ENCODE measurements at regions of chr7 and their contacts with region 1.

Region 1: GRCh38 chr7:134420424-134421125 is 38.3 kb downstream of the AKR1B1 start:
- DNase-seq: peak; percentile 55
- H3K4me3 ChIP-seq: no peak overlapping the region
- H3K27ac ChIP-seq: no peak overlapping the region
- H3K4me1 ChIP-seq: peaks cover 6% of the 10 kb centered on the region
- H3K27me3 ChIP-seq: no peaks in the 10 kb centered on the region
- CTCF ChIP-seq: peak; percentile 76 to 89

Region 2: GRCh38 chr7:133987582-133987981 is 433.0 kb before region 1 on chr7:
- CTCF ChIA-PET with region 1: no interaction called
- dilution Hi-C with region 1: no loop called
- in situ Hi-C with region 1: no loop called
- intact Hi-C with region 1: loop called (anchors 1 kb)
- DNase-seq: no peak
- H3K4me3 ChIP-seq: no peak overlapping the region
- H3K27ac ChIP-seq: no peak overlapping the region
- H3K4me1 ChIP-seq: peaks cover 16% of the 10 kb centered on the region
- H3K27me3 ChIP-seq: no peaks in the 10 kb centered on the region
- CTCF ChIP-seq: no peak

Region 3: DNA sequence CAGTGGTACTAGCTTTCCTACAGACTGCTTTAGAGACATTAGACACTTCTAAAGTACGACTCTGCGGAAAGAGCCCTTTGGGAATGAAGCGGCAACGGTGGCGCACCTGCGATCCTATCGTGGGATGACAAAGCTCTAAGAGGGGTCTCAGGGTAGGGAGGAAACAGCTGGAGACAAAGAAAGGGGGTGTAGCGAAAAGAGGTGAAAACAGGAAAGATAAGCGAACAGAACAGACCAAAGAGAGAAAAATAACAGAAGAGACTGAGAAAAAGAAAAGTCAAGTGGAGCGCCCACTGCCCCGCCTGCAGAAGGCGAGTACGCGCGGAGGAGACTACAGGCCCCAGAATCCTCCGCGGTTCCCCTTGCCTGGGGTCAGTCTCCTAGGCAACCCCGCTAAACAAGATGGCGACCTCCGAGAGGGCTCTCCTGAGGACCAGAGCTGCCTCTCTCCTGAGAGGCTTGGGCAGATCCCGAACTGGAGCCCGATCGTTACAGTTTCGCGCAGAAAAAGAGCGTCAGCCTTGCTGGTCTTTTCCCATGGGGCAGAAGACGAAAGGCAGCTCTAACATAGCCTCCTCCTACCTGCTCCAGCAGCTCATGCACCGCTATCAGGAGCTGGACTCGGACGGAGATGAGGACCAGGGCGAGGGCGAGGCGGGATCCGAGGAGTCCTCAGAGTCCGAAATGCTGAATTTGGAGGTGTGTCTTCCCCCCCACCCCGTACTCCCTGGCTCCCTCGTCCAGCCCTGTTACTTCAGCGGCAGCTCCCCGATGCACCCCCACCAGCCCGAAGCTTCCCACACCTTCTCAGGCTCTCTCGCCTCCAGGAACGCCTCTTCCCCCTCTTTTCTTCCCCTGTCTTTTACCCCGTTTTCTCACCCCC is 293.4 kb before region 1 on chr7 and contains the start of gene LRGUK:
- CTCF ChIA-PET with region 1: interaction called, 10 read pairs
- dilution Hi-C with region 1: no loop called
- in situ Hi-C with region 1: loop called in 1 of 2 experiments (anchors 25 kb)
- intact Hi-C with region 1: loop called (anchors 5 kb)
- DNase-seq: peak; percentile 59
- H3K4me3 ChIP-seq: peak within 1 kb of the TSS; percentile 81 to 84 (median 83)
- H3K27ac ChIP-seq: peak within 1 kb of the TSS; percentile 36
- H3K4me1 ChIP-seq: peaks cover 4% of the 10 kb centered on the region
- H3K27me3 ChIP-seq: peaks cover 5% of the 10 kb centered on the region
- CTCF ChIP-seq: peak in 1 of 2 donors; percentile 1
- total RNA-seq, gene LRGUK: 0.17 to 0.21 TPM

Region 4: GRCh38 chr7:134254311-134254710 is 166.3 kb before region 1 on chr7:
- CTCF ChIA-PET with region 1: no interaction called
- dilution Hi-C with region 1: no loop called
- in situ Hi-C with region 1: no loop called
- intact Hi-C with region 1: loop called (anchors 1 kb)
- DNase-seq: no peak
- H3K4me3 ChIP-seq: no peak overlapping the region
- H3K27ac ChIP-seq: no peak overlapping the region
- H3K4me1 ChIP-seq: no peaks in the 10 kb centered on the region
- H3K27me3 ChIP-seq: no peaks in the 10 kb centered on the region
- CTCF ChIP-seq: peak; percentile 16 to 60

Region 5: GRCh38 chr7:134343796-134344195 is 76.8 kb before region 1 on chr7:
- CTCF ChIA-PET with region 1: no interaction called
- dilution Hi-C with region 1: no loop called
- in situ Hi-C with region 1: no loop called
- intact Hi-C with region 1: no loop called
- DNase-seq: no peak
- H3K4me3 ChIP-seq: no peak overlapping the region
- H3K27ac ChIP-seq: no peak overlapping the region
- H3K4me1 ChIP-seq: no peaks in the 10 kb centered on the region
- H3K27me3 ChIP-seq: no peaks in the 10 kb centered on the region
- CTCF ChIP-seq: no peak

Region 6: GRCh38 chr7:134368851-134369552 is 51.6 kb before region 1 on chr7:
- CTCF ChIA-PET with region 1: no interaction called
- dilution Hi-C with region 1: no loop called
- in situ Hi-C with region 1: no loop called
- intact Hi-C with region 1: loop called (anchors 1 kb)
- DNase-seq: peak; percentile 74
- H3K4me3 ChIP-seq: no peak overlapping the region
- H3K27ac ChIP-seq: no peak overlapping the region
- H3K4me1 ChIP-seq: peaks cover 49% of the 10 kb centered on the region
- H3K27me3 ChIP-seq: no peaks in the 10 kb centered on the region
- CTCF ChIP-seq: no peak

Measured in mammary epithelial cell (primary cell).